CD4-positive, alpha-beta T cell (primary cell): ENCODE measurements at regions of chr3 and their contacts with region 1.

Region 1: DNA sequence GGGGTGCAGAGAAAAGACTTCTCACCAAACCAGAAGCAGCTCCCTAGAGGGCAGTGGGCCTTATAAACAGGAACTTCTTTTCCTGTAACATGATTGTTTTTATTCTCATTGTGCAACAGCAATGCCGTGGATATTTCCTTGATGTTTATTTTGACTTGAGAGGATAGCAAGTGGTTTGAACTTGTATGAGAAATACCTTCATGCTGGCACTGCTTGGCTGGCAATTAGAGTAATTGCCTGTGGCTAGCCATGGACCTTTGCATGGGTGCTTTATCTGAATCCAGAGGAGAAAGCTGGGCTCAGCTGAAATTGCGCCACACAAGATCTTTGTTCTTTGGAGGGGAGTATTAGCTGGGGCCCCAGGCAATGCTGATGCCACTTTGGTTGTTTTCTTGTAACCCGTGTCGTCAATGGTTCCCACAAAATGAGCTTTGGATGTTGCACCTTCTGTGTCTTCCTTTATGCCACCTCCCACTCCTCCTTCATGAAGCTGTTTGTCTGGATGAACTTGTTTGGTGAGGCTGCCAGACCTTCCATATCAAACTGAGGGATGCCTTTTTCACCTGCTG is 37.9 kb downstream of the CMTM8 start:
- DNase-seq: no peak
- ATAC-seq: no peak
- H3K4me3 ChIP-seq: no peak overlapping the region
- H3K4me3 Mint-ChIP-seq: no peak overlapping the region
- H3K27ac ChIP-seq: no peak overlapping the region
- H3K27ac Mint-ChIP-seq: no peak overlapping the region
- H3K4me1 ChIP-seq: peaks cover 4% of the 10 kb centered on the region
- H3K4me1 Mint-ChIP-seq: peaks cover 12% of the 10 kb centered on the region
- H3K27me3 ChIP-seq: no peaks in the 10 kb centered on the region
- H3K27me3 Mint-ChIP-seq: no peaks in the 10 kb centered on the region
- CTCF ChIP-seq: no peak

Region 2: GRCh38 chr3:32288819-32289218 is 12.5 kb after region 1 on chr3:
- CTCF ChIA-PET with region 1: no interaction called
- POLR2A ChIA-PET with region 1: interaction called, 13 read pairs
- intact Hi-C with region 1: no loop called
- DNase-seq: peak in 6 of 14 experiments; percentile 12 to 73 (median 48)
- ATAC-seq: peak; percentile 83
- H3K4me3 ChIP-seq: no peak overlapping the region
- H3K4me3 Mint-ChIP-seq: peak overlapping the region; percentile 3
- H3K27ac ChIP-seq: no peak overlapping the region
- H3K27ac Mint-ChIP-seq: peak overlapping the region; percentile 79
- H3K4me1 ChIP-seq: peaks cover 37% of the 10 kb centered on the region
- H3K4me1 Mint-ChIP-seq: peaks cover 50% of the 10 kb centered on the region
- H3K27me3 ChIP-seq: no peaks in the 10 kb centered on the region
- H3K27me3 Mint-ChIP-seq: no peaks in the 10 kb centered on the region
- CTCF ChIP-seq: peak; percentile 19